ENCODE measurements at regions of chr15 and their contacts with region 1.

Region 1: GRCh38 chr15:67091071-67091979 is 25.9 kb downstream of the SMAD3 start:
- DNase-seq: peak; percentile 95
- H3K4me3 Mint-ChIP-seq: peak overlapping the region; percentile 81
- H3K27ac Mint-ChIP-seq: peak overlapping the region; percentile 95
- H3K4me1 Mint-ChIP-seq: peaks cover 92% of the 10 kb centered on the region
- H3K27me3 Mint-ChIP-seq: no peaks in the 10 kb centered on the region

Region 2: GRCh38 chr15:67080900-67081431 is 10.4 kb before region 1 on chr15:
- intact Hi-C with region 1: loop called (anchors 1 kb)
- DNase-seq: peak; percentile 83
- H3K4me3 Mint-ChIP-seq: peak overlapping the region; percentile 63
- H3K27ac Mint-ChIP-seq: peak overlapping the region; percentile 96
- H3K4me1 Mint-ChIP-seq: peaks cover 94% of the 10 kb centered on the region
- H3K27me3 Mint-ChIP-seq: no peaks in the 10 kb centered on the region

Region 3: DNA sequence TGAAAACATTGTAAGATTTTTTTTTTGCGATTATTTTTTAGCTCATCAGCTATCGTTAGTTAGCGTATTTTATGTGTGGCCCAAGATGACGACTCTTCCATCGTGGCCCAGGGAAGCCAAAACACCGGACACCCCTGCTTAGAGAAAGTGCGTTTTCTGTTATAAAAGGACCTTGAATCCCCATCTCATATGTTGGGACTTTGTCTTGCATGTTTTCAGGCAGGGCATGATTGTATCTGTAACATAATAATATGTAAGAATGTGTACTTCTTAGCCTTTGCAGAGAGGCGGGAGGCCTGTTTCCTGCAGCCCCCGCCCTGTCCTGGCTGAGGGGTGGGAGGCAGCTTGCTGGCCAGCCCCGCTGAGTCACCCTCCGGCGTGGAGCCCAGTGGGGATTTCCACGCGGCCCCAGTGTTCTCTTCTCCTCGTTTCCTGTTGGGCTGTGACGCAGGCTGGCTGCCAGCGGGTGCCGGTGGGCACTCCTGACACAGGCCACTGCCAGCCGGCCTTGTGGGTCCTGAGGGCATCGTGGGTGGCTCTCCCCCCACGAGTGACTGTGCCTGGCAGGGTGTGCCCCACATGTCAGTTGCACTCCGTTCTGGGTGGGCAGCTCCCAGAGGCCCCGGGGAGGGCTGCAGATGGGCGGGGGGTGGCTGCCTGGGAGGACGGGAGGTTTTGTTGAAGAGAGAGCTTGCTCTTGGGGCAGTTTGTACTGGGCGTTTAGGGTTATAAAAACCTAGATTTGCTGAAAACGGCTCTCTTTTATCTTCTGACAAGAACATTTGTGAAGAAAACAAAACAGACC is 29.7 kb after region 1 on chr15:
- intact Hi-C with region 1: loop called (anchors 2 kb)
- DNase-seq: peak; percentile 96
- H3K4me3 Mint-ChIP-seq: peak overlapping the region; percentile 87
- H3K27ac Mint-ChIP-seq: peak overlapping the region; percentile 99
- H3K4me1 Mint-ChIP-seq: peaks cover 86% of the 10 kb centered on the region
- H3K27me3 Mint-ChIP-seq: no peaks in the 10 kb centered on the region